ENCODE measurements at regions of chr1 and their contacts with region 1.

Region 1: GRCh38 chr1:215566556-215567490 is at the start of gene KCTD3:
- DNase-seq: peak in 1 of 2 donors; percentile 86
- H3K4me3 ChIP-seq: peak within 1 kb of the TSS; percentile 93 to 98
- H3K27ac ChIP-seq: peak within 1 kb of the TSS; percentile 86 to 97
- H3K4me1 ChIP-seq: peaks cover 4 to 14% of the 10 kb centered on the region in 2 donors
- H3K27me3 ChIP-seq: no peaks in the 10 kb centered on the region
- CTCF ChIP-seq: no peak
- total RNA-seq, gene KCTD3: 55.8 TPM

Region 2: GRCh38 chr1:215606564-215607168 is 39.8 kb after region 1 on chr1:
- intact Hi-C with region 1: loop called (anchors 5 kb)
- DNase-seq: no peak
- H3K4me3 ChIP-seq: no peak overlapping the region
- H3K27ac ChIP-seq: no peak overlapping the region
- H3K4me1 ChIP-seq: peaks cover 0 to 3% of the 10 kb centered on the region in 2 donors
- H3K27me3 ChIP-seq: no peaks in the 10 kb centered on the region
- CTCF ChIP-seq: peak in 2 of 3 experiments; percentile 35 to 39

Region 3: DNA sequence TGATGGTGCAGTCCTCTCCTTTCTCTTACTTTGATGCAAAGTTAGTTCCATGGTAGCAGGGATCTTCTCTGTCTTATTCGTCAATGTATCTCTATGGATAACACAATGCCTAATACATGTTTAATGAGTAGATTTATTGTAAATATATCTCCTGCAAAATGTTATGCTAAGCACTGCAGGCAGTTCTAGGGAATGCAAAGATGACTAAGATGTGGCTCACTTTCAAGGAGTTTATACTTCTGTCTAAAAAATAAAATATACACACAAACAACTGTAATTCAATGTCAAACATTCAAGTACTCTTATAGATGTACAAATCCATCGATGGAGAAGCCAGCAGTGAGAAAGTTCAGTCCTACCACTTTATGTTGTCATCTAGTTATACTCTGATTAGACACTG is 194.6 kb after region 1 on chr1:
- intact Hi-C with region 1: no loop called
- DNase-seq: no peak
- H3K4me3 ChIP-seq: no peak overlapping the region
- H3K27ac ChIP-seq: no peak overlapping the region
- H3K4me1 ChIP-seq: no peaks in the 10 kb centered on the region
- H3K27me3 ChIP-seq: no peaks in the 10 kb centered on the region
- CTCF ChIP-seq: no peak

Measured in ascending aorta (tissue), 2 donors.